ENCODE measurements at regions of chr1 and their contacts with region 1.

Region 1: GRCh38 chr1:20534659-20535417 is 17.5 kb upstream of the FAM43B start:
- DNase-seq: no peak
- H3K4me3 ChIP-seq: no peak overlapping the region
- H3K27ac ChIP-seq: no peak overlapping the region
- H3K4me1 ChIP-seq: no peaks in the 10 kb centered on the region
- H3K27me3 ChIP-seq: no peaks in the 10 kb centered on the region
- CTCF ChIP-seq: no peak
- POLR2A ChIP-seq: no peak

Region 2: GRCh38 chr1:22388671-22389450 is 1854.0 kb after region 1 on chr1:
- intact Hi-C with region 1: loop called (anchors 5 kb)
- DNase-seq: no peak
- H3K4me3 ChIP-seq: no peak overlapping the region
- H3K27ac ChIP-seq: no peak overlapping the region
- H3K4me1 ChIP-seq: no peaks in the 10 kb centered on the region
- H3K27me3 ChIP-seq: no peaks in the 10 kb centered on the region
- CTCF ChIP-seq: no peak
- POLR2A ChIP-seq: no peak

Measured in vagina (tissue), 2 donors.